Psoas muscle (tissue), 8 donors: ENCODE measurements at regions of chr6 and their contacts with region 1.

Region 1: GRCh38 chr6:160455541-160456213 is 107.5 kb downstream of the SLC22A3 start:
- DNase-seq: peak; percentile 48 to 64
- ATAC-seq: peak; percentile 74 to 90 (median 80)
- H3K4me3 ChIP-seq: peak overlapping the region; percentile 43
- H3K27ac ChIP-seq: no peak overlapping the region
- H3K4me1 ChIP-seq: no peaks in the 10 kb centered on the region
- H3K27me3 ChIP-seq: no peaks in the 10 kb centered on the region
- CTCF ChIP-seq: peak; percentile 95

Region 2: DNA sequence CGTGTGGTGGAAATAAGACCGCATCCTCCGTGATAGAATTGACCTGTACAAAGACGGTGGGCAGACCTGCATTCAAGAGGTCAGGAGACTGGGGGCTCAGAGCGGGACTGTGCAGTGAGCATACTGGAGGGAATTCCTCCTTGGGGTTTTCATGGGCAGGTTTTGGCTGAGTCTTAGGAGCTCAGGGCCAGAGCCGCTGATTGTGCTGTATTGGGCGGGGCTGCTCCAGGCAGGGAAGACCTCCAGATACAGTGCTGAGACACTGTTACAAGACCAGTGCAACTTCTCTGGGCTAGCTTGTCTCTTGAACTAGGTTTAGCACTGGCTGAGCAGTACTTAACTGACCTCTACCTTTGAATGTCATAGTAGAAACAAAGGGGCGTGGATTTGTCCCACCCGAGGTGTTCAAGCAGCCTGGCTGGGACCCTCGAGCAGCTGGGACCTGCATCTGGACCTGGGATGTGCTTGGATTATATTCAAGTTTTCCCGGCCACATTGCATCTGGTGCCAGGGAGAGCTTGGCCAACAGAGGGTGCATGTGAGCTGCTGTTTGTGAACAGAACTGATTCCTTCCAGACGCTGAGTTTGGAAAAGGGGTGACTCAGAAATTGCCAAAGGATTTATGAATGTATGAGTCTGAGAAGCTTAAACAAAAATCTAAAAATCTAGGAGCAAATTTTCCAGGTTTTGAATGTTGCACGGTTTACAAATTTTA is 367.5 kb before region 1 on chr6:
- intact Hi-C with region 1: loop called in 1 of 2 experiments (anchors 5 kb)
- DNase-seq: peak; percentile 64 to 81
- ATAC-seq: peak; percentile 65 to 83 (median 70)
- H3K4me3 ChIP-seq: no peak overlapping the region
- H3K27ac ChIP-seq: no peak overlapping the region
- H3K4me1 ChIP-seq: no peaks in the 10 kb centered on the region
- H3K27me3 ChIP-seq: no peaks in the 10 kb centered on the region
- CTCF ChIP-seq: peak; percentile 55

Region 3: GRCh38 chr6:160121981-160122380 is 333.7 kb before region 1 on chr6:
- intact Hi-C with region 1: no loop called
- DNase-seq: no peak
- ATAC-seq: peak in 1 of 4 donors; percentile 14
- H3K4me3 ChIP-seq: no peak overlapping the region
- H3K27ac ChIP-seq: no peak overlapping the region
- H3K4me1 ChIP-seq: no peaks in the 10 kb centered on the region
- H3K27me3 ChIP-seq: no peaks in the 10 kb centered on the region
- CTCF ChIP-seq: no peak

Region 4: DNA sequence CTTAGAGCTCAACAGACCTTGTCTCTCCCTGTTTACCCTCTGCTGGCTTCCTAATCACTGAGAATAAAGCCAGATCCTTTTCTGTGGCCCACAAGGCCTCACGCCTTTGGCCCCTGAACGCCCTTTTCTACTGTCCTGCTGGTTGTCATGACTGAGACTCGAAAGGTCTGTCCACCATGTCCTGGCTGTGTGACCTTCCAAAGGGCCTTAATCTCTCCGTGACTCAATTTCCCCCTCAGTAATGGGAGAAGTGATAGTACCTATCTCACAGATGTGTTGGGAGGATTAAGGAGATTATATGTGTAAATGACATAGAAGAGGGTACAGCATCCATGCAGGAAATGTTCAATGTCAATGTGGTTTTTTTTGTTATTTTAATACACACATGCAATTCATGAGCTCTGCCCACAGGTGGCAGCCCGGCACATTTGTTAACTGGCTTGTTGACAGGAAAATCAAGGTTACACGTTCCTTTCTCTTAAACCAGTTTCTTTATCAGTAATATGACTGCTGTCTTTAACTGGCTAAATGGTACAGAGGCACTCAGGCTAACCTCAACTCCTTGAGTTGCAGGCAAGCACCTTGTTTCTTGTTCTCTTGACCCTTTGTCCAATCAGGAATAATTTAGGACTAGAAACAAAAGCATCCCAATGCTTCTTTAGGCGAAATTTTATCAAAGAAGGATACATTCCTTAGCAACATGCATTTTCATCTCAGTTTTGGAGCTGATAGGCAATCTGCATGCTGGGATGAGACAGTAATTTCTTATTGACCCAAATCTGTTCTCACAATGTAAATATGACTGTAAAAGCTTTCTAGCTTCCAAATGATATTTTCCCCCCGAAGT is 317.5 kb before region 1 on chr6:
- intact Hi-C with region 1: loop called (anchors 1 to 5 kb)
- DNase-seq: no peak
- ATAC-seq: peak; percentile 59 to 83 (median 66)
- H3K4me3 ChIP-seq: no peak overlapping the region
- H3K27ac ChIP-seq: no peak overlapping the region
- H3K4me1 ChIP-seq: no peaks in the 10 kb centered on the region
- H3K27me3 ChIP-seq: no peaks in the 10 kb centered on the region
- CTCF ChIP-seq: peak; percentile 71

Region 5: DNA sequence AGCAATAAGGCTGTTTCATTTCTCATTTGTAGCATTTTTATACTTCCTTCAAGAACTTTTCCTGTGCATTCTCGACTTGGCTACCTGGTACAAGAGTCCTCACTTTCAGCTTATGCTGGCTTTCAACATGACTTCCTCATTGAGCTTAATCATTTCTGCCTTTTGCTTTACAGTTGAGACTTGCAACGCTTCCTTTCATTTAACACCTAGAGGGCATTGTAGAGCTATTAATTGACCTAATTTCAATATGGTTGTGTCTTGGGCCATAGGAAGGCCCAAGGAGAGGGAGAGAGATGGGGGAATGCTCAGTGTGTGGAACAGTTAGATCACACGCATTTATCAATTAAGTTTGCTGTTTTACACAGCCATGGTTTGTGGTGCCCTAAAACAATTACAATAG is 234.3 kb before region 1 on chr6:
- intact Hi-C with region 1: loop called in 1 of 2 experiments (anchors 10 kb)
- DNase-seq: no peak
- ATAC-seq: peak; percentile 42 to 69 (median 60)
- H3K4me3 ChIP-seq: no peak overlapping the region
- H3K27ac ChIP-seq: no peak overlapping the region
- H3K4me1 ChIP-seq: no peaks in the 10 kb centered on the region
- H3K27me3 ChIP-seq: no peaks in the 10 kb centered on the region
- CTCF ChIP-seq: no peak

Region 6: DNA sequence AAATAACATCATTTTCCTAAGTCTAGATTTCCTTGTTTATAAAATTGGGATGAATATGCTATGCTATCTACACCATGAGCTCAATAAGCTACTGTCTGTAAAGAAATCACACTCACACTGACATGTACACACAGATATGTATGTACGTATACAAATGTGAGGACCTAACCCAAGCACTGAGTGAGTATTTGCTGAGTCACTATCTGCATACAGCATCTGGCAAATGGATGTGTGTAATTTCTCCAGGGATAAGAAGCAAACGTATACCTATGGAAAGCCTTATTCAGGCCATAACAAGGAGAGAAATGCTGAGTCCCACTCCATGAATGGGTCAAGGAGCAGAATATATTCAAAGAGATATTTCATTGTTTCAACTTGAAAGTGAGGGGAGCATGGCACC is 54.5 kb after region 1 on chr6:
- intact Hi-C with region 1: no loop called
- DNase-seq: no peak
- ATAC-seq: no peak
- H3K4me3 ChIP-seq: no peak overlapping the region
- H3K27ac ChIP-seq: no peak overlapping the region
- H3K4me1 ChIP-seq: no peaks in the 10 kb centered on the region
- H3K27me3 ChIP-seq: peaks cover 0 to 3% (median 0%) of the 10 kb centered on the region in 3 donors
- CTCF ChIP-seq: no peak

Region 7: GRCh38 chr6:160534050-160534696 is 78.5 kb after region 1 on chr6:
- intact Hi-C with region 1: loop called (anchors 1 kb)
- DNase-seq: peak; percentile 39 to 63
- ATAC-seq: peak; percentile 62 to 82 (median 78)
- H3K4me3 ChIP-seq: peak overlapping the region; percentile 13
- H3K27ac ChIP-seq: no peak overlapping the region
- H3K4me1 ChIP-seq: peaks cover 4% of the 10 kb centered on the region
- H3K27me3 ChIP-seq: no peaks in the 10 kb centered on the region
- CTCF ChIP-seq: peak; percentile 94